Dendritic cell treated with granulocyte-macrophage colony-stimulating factor and Interleukin-4, amounts not matched to agents 40 ng/mL and 50 ng/mL, for 4 days (primary cell): ENCODE measurements at regions of chr6 and their contacts with region 1.

Region 1: DNA sequence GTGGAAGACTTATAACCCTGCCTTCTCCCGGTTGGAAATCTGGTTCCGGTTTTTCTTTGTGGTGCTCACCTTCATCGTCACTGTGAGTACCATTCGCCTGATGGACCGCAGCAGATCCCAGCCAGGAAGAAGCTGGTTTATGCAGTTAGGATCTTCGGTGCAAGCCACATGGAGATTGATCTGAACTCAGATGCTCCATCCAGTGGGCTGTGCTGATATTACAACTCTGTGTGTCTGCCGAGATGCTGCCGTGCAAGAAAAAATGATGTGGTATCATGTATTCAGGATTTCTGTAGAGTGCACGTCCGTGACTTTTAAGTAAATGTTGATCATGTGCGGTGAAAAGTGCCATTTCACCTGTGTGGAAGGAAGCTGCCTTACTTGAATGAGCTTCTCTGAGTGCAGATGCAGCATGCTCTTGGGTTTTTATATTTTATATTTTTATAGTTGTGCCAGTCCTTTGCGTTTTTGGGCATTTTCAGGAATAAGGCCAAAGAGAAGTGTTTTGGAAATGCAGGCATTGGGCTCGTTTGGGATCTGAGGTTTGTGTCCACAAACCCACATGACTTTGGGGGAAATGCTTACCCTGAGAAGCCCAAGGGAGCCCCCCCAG is 39.2 kb downstream of the DYNLT1 start:
- H3K4me3 Mint-ChIP-seq: no peak overlapping the region
- H3K27ac Mint-ChIP-seq: no peak overlapping the region
- H3K4me1 Mint-ChIP-seq: no peaks in the 10 kb centered on the region
- H3K27me3 Mint-ChIP-seq: no peaks in the 10 kb centered on the region

Region 2: GRCh38 chr6:158213925-158214674 is 391.3 kb before region 1 on chr6:
- intact Hi-C with region 1: loop called (anchors 1 kb)
- H3K4me3 Mint-ChIP-seq: no peak overlapping the region
- H3K27ac Mint-ChIP-seq: no peak overlapping the region
- H3K4me1 Mint-ChIP-seq: peaks cover 4% of the 10 kb centered on the region
- H3K27me3 Mint-ChIP-seq: peaks cover 4% of the 10 kb centered on the region

Region 3: GRCh38 chr6:158784505-158784904 is 179.1 kb after region 1 on chr6:
- intact Hi-C with region 1: no loop called
- H3K4me3 Mint-ChIP-seq: no peak overlapping the region
- H3K27ac Mint-ChIP-seq: no peak overlapping the region
- H3K4me1 Mint-ChIP-seq: no peaks in the 10 kb centered on the region
- H3K27me3 Mint-ChIP-seq: no peaks in the 10 kb centered on the region